ENCODE measurements at regions of chr11 and their contacts with region 1.

Region 1: DNA sequence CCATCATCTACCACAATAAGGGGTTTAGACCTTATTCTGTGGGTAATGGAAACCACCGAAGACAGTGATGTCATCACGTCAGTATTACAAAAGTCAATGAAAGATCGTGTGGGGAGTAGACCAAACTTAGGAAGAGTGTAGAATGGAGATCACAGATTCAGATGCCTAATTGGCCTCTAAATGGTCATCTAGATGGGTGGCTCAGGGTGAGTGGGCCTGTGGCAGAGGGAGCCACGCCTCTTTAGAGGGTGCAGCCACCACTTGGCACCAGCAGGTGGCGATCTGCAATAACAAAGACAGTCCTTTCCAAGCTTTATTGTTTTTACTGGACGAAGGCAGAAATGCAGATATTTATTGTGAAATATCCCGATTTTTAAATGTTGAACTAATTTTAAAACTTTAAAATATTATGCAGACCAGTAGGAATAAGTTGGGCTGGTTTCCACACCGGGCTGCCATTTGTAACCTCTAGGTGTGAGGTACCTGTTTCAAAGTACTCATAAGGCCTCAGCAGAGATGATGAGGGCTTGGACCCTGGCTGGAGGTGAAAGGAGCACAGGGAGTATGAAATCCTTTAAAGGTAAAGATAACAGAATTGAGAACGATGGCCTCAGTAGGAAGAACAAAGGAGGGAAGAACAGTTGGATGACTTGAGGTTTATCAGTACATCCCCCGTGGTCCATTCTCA is 222.0 kb downstream of the DBX1 start:
- DNase-seq: no peak
- H3K4me3 ChIP-seq: no peak overlapping the region
- H3K27ac ChIP-seq: no peak overlapping the region
- H3K27me3 ChIP-seq: no peaks in the 10 kb centered on the region
- CTCF ChIP-seq: peak; percentile 78

Region 2: DNA sequence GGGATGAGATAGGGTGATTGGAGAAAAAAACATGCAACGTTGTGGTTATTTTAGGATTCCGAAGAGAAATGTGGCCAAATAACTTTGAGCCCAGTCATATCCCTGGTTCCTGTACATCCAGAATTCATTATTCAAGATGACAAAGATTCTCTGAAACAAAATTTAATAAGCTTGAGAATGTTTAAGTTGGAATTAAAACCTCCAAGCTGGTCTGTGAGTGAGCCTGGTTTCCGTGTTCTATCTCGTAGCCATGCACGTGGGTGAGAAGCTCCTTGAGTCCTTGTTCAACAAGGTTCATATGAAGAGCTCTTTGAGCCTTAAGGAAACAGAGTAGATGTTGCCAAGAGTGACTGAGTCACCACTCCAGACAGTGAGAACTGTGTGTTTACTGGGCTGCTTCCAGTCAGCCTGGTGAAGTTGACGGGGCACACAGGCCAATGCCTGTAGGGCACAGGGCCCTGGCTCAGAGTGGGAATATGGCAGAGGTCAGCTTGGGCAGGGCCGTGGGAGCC is 19.2 kb before region 1 on chr11:
- CTCF ChIA-PET with region 1: interaction called, 6 read pairs
- POLR2A ChIA-PET with region 1: interaction called, 15 read pairs
- DNase-seq: peak; percentile 85
- H3K4me3 ChIP-seq: no peak overlapping the region
- H3K27ac ChIP-seq: peak overlapping the region; percentile 77
- H3K27me3 ChIP-seq: no peaks in the 10 kb centered on the region
- CTCF ChIP-seq: no peak

Measured in AG04450 (cell line).